H1 (cell line): ENCODE measurements at regions of chr19 and their contacts with region 1.

Region 1: GRCh38 chr19:4322942-4323665 is 15.5 kb downstream of the STAP2 start:
- DNase-seq: no peak
- H3K4me3 ChIP-seq: no peak overlapping the region
- H3K27ac ChIP-seq: no peak overlapping the region
- H3K4me1 ChIP-seq: peaks cover 0 to 4% (median 2%) of the 10 kb centered on the region in 4 experiments; a peak in 4 of 7 replicates
- H3K27me3 ChIP-seq: no peaks in the 10 kb centered on the region
- CTCF ChIP-seq: no peak
- EP300 ChIP-seq: no peak
- POLR2A ChIP-seq: no peak
- RAD21 ChIP-seq: no peak

Region 2: DNA sequence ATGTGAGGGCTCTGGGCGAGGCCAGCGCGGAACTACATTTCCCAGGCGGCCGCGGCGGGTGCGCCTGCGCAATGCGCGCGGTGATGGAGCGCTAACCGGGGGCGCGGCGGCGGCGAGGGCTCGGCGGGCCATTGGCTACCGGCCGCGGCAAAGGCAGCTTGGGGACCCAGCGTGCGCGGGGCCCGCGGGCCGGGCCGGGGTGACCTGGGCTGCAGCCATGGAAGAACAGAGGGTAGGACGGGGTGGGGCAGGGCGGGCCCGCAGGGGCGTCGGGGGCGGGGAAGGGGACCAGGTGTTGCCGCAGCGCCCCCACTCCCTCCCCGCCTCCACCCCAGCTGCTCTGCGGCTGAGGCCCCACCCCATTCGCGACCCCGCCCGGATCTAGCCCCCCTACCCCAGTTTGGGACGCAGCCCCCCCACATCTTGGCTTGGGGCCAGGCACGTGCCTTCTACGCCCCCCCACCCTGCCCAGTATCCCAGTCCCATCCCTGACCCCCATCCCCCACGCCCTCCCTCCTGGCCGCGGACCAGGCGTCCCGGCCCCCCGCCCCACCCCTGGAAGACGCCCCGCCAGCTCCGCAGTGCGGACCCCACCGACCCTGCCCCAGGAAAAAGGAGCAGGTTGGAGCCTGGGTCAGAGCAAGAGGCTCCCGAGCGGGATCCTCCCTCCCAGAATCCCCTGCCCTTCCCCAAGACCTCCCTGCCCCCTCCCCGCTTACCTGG is 18.4 kb before region 1 on chr19 and contains the start of gene FSD1:
- CTCF ChIA-PET with region 1: interaction called, 8 read pairs
- POLR2A ChIA-PET with region 1: interaction called, 86 read pairs
- DNase-seq: peak; percentile 39 to 95
- H3K4me3 ChIP-seq: peak within 1 kb of the TSS; percentile 14 to 58 (median 42); a peak in 6 of 8 replicates
- H3K27ac ChIP-seq: no peak within 1 kb of the TSS
- H3K4me1 ChIP-seq: peaks cover 0 to 8% (median 0%) of the 10 kb centered on the region in 4 experiments; a peak in 3 of 7 replicates
- H3K27me3 ChIP-seq: no peaks in the 10 kb centered on the region
- CTCF ChIP-seq: no peak
- EP300 ChIP-seq: no peak
- POLR2A ChIP-seq: no peak
- RAD21 ChIP-seq: no peak
- total RNA-seq, gene FSD1: 54.8 and 58.8 TPM in 2 replicates